Tibial artery (tissue), 4 donors: ENCODE measurements at regions of chr22 and their contacts with region 1.

Region 1: GRCh38 chr22:38305471-38306448 is 11.5 kb downstream of the CSNK1E start:
- DNase-seq: no peak
- H3K4me3 ChIP-seq: no peak overlapping the region
- H3K27ac ChIP-seq: peak overlapping the region; percentile 60 to 69
- H3K4me1 ChIP-seq: peaks cover 0 to 77% (median 54%) of the 10 kb centered on the region in 4 donors
- H3K27me3 ChIP-seq: no peaks in the 10 kb centered on the region
- CTCF ChIP-seq: no peak

Region 2: DNA sequence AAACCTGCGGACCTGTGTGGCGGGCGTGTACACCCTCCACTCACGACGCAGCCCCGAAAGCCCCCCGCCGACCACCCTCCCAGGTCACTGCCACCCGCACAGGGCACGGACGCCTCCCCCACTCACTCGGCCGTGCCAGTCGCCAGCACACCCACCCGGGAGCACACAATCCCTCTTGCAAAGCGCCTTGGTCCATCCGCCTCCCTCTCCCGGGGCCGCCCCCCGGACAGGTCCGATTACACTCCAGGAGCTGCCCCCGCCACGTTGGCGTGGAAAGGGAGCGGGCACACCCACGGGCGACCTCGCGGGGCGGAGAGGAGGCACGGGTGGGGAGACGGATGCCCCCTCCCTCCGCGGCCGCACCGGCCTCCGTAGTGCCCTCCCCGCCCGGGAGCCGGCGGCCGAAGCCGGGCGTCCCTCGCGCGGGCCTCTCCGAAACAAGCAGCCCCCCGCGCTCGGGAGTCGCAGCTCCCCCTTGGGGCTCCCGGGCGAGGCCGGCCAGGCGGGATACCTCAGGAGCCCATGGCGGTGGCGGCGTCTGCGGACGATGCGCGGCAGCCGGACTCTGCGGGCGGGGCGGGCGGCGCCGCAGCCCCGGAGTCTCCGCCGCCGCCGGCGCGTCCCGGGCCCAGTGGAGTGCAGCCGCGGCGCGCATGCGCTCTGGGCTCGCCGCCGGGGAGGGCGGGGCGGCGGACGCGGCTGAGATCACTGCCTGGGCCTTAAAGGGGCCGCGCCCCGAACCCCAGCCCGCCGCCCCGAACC is 33.2 kb before region 1 on chr22 and contains the start of gene TMEM184B:
- intact Hi-C with region 1: loop called (anchors 5 kb)
- DNase-seq: peak; percentile 77 to 88
- H3K4me3 ChIP-seq: peak within 1 kb of the TSS; percentile 97 to 99
- H3K27ac ChIP-seq: peak within 1 kb of the TSS; percentile 95 to 96
- H3K4me1 ChIP-seq: peaks cover 6 to 52% (median 37%) of the 10 kb centered on the region in 4 donors
- H3K27me3 ChIP-seq: no peaks in the 10 kb centered on the region
- CTCF ChIP-seq: no peak